Mammary epithelial cell (primary cell): ENCODE measurements at regions of chr10 and their contacts with region 1.

Region 1: GRCh38 chr10:62099299-62099698 is 169.3 kb downstream of the RTKN2 start:
- DNase-seq: no peak
- H3K4me3 ChIP-seq: no peak overlapping the region
- H3K27ac ChIP-seq: no peak overlapping the region
- H3K4me1 ChIP-seq: peaks cover 20% of the 10 kb centered on the region
- H3K27me3 ChIP-seq: no peaks in the 10 kb centered on the region
- CTCF ChIP-seq: no peak

Region 2: GRCh38 chr10:61961278-61961677 is 138.0 kb before region 1 on chr10:
- CTCF ChIA-PET with region 1: no interaction called
- dilution Hi-C with region 1: no loop called
- in situ Hi-C with region 1: no loop called
- intact Hi-C with region 1: no loop called
- DNase-seq: no peak
- H3K4me3 ChIP-seq: no peak overlapping the region
- H3K27ac ChIP-seq: no peak overlapping the region
- H3K4me1 ChIP-seq: no peaks in the 10 kb centered on the region
- H3K27me3 ChIP-seq: no peaks in the 10 kb centered on the region
- CTCF ChIP-seq: no peak

Region 3: DNA sequence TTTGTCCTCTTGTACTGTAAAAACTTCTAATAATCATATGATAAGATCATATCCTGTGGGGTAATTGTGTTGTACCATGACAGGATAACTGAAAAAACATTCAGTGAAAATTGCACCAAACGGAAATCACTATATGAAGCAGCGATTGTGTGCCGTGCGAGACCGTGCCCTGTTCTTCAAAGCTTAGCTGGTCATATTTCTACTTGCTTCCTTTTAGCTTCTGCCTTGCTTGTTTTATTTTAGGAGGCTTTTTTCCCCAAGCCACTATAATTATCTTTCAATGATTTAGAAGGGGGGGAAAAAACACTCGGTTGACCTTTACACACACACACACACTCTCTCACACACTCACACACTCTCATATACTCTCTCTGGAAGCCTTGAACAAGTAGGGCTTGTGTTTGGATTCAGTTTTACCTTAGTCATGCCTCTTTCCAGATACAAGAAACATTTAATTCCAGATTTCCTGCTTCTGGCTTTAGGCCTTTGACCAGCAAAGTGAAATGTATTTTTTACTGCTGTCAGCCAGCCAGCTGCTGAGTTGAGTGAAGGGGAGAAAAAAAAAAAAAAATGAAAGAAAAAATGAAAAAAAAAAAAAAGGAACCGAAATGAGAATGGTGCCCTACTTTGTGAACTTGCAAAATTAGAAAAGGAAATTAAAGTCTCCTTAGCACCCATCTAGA is 16.4 kb before region 1 on chr10:
- CTCF ChIA-PET with region 1: interaction called, 25 read pairs
- dilution Hi-C with region 1: no loop called
- in situ Hi-C with region 1: no loop called
- intact Hi-C with region 1: no loop called
- DNase-seq: peak; percentile 38
- H3K4me3 ChIP-seq: peak overlapping the region in 2 of 3 experiments; percentile 1 to 21
- H3K27ac ChIP-seq: peak overlapping the region; percentile 98
- H3K4me1 ChIP-seq: peaks cover 36% of the 10 kb centered on the region
- H3K27me3 ChIP-seq: no peaks in the 10 kb centered on the region
- CTCF ChIP-seq: no peak

Region 4: DNA sequence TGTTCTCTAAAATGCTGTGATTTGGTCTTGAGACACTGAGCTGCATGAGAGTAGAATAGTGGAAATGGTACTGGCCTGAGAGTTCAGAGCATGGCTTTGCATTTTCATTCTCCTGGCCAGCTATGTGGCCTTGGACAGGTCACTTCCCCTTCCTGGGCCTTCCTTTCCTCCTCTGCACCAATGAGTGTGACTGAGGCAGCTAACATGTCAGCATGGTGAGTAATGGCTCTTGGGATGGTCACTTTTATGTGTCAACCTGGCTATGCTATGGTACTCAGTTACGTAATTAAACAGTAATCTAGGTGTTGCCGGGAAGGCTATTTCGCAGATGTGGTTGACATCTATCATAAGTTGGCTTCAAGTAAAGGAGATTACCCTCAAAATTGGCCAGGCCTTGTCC is 60.1 kb after region 1 on chr10:
- CTCF ChIA-PET with region 1: no interaction called
- dilution Hi-C with region 1: loop called (anchors 5 kb)
- in situ Hi-C with region 1: no loop called
- intact Hi-C with region 1: no loop called
- DNase-seq: peak; percentile 8
- H3K4me3 ChIP-seq: no peak overlapping the region
- H3K27ac ChIP-seq: no peak overlapping the region
- H3K4me1 ChIP-seq: no peaks in the 10 kb centered on the region
- H3K27me3 ChIP-seq: no peaks in the 10 kb centered on the region
- CTCF ChIP-seq: no peak